Right lobe of liver (tissue), 6 donors: ENCODE measurements at regions of chr17 and their contacts with region 1.

Region 1: DNA sequence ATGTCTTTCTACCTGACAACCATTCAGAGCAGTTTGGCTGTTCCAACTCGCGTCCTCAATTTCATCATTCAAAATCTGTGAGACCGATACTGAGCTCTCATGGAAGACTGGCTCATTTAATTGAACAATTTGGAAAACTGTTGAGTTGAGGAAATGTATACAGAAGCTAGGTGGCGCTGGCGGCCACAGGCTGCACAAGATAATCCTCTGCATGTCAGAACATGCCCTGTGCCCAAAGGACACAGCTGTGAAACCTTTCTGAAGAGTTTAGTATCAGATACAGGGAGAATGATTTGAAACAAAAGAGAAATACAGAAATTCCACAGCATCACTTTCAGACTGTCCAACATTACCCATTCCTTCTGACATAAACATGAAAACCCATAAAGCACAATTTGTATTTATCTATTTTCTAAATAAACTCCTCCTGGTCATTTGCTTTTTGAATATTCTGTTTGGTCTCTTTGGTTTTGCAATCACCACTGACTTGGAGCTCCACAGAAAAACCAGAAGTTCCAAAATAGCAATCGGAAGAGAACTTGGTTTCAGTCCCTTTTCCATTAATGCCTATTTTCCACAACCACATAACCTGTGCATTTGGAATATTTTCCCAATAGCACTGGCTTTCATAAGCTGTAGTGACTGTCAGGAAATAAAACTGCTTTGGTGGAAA is 192.8 kb downstream of the MAP2K6 start:
- DNase-seq: peak; percentile 65 to 71 (median 71)
- ATAC-seq: peak; percentile 95 to 98 (median 97)
- H3K4me3 ChIP-seq: no peak overlapping the region
- H3K27ac ChIP-seq: no peak overlapping the region
- H3K4me1 ChIP-seq: peaks cover 0 to 9% (median 3%) of the 10 kb centered on the region in 4 donors
- H3K27me3 ChIP-seq: no peaks in the 10 kb centered on the region
- CTCF ChIP-seq: peak; percentile 87 to 92 (median 90)
- POLR2A ChIP-seq: no peak

Region 2: DNA sequence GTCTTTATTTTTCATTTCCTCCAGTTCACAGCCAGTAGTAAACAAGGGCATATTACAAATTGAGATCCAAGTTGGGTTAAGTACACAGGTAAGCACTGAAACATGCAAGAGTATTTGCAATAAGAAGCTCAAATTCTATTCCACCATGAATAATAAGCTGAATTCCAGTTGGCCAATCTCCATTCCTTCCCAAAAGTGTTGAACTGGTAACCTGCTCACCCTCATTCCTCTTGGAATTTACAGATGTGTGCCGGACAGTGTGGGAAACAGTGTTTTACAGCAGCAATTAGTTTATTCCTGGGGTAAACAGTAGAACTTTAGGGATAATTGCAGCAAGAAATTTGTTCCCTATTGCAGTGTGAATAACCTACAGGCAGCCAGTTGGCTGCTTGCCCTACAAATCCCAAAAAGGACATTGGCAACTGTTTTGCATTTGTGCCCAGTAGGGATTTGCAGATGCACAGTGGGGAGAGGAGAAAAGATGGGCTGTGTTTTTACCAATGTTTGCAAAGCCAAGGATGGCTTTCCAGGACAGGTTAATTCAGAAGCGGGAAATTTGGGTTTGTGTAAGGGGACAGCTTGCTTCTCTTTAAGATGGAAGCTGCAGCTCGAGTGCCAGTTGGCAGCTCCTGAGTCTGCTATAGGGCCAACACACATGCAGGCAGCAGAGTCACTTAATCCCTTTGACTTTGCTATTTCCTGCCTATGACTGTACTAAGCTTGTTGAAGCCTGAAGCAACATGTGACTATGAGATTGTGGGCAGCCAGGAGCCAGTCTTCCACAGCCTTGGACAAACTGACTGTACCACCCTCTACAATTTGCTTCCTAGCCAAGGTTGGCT is 126.1 kb after region 1 on chr17:
- intact Hi-C with region 1: no loop called
- DNase-seq: no peak
- ATAC-seq: peak in 1 of 4 donors; percentile 24
- H3K4me3 ChIP-seq: no peak overlapping the region
- H3K27ac ChIP-seq: no peak overlapping the region
- H3K4me1 ChIP-seq: no peaks in the 10 kb centered on the region
- H3K27me3 ChIP-seq: no peaks in the 10 kb centered on the region
- CTCF ChIP-seq: no peak
- POLR2A ChIP-seq: no peak

Region 3: GRCh38 chr17:70144260-70144846 is 537.1 kb after region 1 on chr17:
- intact Hi-C with region 1: loop called in 1 of 2 experiments (anchors 10 kb)
- DNase-seq: no peak
- ATAC-seq: peak; percentile 42 to 56 (median 50)
- H3K4me3 ChIP-seq: no peak overlapping the region
- H3K27ac ChIP-seq: no peak overlapping the region
- H3K4me1 ChIP-seq: no peaks in the 10 kb centered on the region
- H3K27me3 ChIP-seq: no peaks in the 10 kb centered on the region
- CTCF ChIP-seq: peak; percentile 61 to 73 (median 66)
- POLR2A ChIP-seq: no peak